ENCODE measurements at regions of chr15 and their contacts with region 1.

Region 1: DNA sequence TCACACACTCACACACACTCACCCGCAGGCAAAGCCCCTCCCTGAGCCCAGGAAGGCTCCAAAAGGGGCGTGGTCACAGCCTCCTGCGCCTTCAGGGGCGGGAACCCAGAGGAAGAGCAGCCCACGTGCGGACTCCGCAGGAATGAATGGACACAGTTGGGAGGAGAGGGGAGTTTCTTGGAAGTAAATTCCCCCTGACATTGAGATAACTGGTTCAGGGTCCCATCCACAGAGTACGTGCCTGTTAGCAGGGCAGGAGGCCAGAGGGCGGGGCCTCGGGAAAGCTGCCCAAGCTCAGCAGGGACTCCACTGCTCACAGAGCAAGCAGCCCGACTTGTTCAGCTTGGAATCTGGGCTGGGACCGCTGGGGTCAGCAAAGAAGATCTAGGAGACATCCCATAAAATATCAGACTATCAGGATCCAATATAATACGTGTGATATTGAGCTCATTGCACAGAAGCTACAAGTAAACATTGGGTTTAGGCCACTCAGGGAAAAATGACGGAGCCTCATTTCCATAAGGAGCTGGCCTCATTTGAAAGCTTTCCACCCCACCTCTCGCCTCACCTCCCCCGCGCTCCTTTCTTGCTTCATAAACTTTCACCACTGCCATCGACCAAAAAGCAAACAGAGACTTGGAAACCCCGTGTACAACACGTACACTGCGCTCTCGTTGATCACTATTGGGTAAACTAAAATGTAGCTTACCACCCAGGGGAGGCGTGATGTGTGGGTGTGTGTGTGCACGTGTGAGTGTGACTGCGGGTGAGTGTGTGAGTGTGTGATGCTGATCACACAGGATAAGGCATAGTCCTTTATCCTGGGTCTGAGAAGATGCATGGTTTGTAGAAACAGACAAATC is 36.0 kb downstream of the TM2D3 start:
- DNase-seq: peak; percentile 73 to 86
- ATAC-seq: peak; percentile 12 to 60 (median 48)
- H3K4me3 ChIP-seq: peak overlapping the region; percentile 32
- H3K27ac ChIP-seq: peak overlapping the region; percentile 67
- H3K4me1 ChIP-seq: peaks cover 76% of the 10 kb centered on the region
- H3K27me3 ChIP-seq: no peaks in the 10 kb centered on the region
- CTCF ChIP-seq: no peak

Region 2: DNA sequence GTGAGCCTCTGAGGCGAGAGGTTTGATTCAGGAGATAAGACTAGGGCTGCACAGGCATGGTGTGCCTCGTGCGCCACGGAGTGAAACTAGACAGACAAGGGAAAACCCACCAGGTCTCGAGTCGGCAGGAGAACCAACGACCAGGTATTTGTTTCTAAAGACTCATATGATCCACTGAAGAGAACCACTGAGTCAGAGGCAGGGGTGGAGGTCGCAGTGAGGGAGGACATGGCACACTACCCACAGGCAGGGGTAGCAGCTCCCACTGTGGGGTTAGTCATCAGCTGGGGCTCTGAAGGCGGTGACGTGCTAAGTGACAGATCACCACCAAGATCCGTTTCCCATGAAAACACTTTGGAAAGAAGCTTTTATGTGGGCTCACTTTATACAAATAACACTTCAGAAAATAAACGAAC is 410.0 kb before region 1 on chr15:
- intact Hi-C with region 1: no loop called
- DNase-seq: no peak
- ATAC-seq: peak in 1 of 4 donors; percentile 36
- H3K4me3 ChIP-seq: no peak overlapping the region
- H3K27ac ChIP-seq: no peak overlapping the region
- H3K4me1 ChIP-seq: peaks cover 28% of the 10 kb centered on the region
- H3K27me3 ChIP-seq: no peaks in the 10 kb centered on the region
- CTCF ChIP-seq: no peak

Region 3: GRCh38 chr15:101445562-101446517 is 170.4 kb before region 1 on chr15:
- intact Hi-C with region 1: loop called in 1 of 2 experiments (anchors 5 kb)
- DNase-seq: peak; percentile 70 to 90
- ATAC-seq: peak; percentile 83 to 88 (median 85)
- H3K4me3 ChIP-seq: no peak overlapping the region
- H3K27ac ChIP-seq: peak overlapping the region; percentile 81
- H3K4me1 ChIP-seq: peaks cover 25% of the 10 kb centered on the region
- H3K27me3 ChIP-seq: no peaks in the 10 kb centered on the region
- CTCF ChIP-seq: no peak

Region 4: DNA sequence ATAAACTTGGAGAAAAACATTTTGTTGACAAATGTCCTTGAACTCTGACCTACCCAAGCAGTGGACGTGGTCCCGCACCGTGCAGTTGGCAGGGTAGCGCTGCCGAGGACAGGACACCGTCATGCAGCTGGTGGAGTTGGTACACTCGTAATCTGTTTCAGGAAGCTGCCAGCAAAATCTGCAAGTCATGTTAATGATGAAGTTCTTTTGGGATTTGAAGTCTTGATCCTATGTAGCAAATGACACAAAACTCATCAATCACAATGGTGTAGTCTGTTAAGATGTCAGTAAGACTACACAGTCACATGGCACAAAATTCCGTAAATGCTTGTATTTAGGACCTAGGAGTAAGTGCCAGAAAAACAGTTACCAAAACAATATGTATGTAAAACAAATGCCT is 30.5 kb after region 1 on chr15:
- intact Hi-C with region 1: loop called in 1 of 2 experiments (anchors 5 kb)
- DNase-seq: peak in 1 of 2 donors; percentile 73
- ATAC-seq: peak; percentile 78 to 87 (median 84)
- H3K4me3 ChIP-seq: no peak overlapping the region
- H3K27ac ChIP-seq: peak overlapping the region; percentile 48
- H3K4me1 ChIP-seq: peaks cover 45% of the 10 kb centered on the region
- H3K27me3 ChIP-seq: no peaks in the 10 kb centered on the region
- CTCF ChIP-seq: no peak

Measured in psoas muscle (tissue), 8 donors.